Right cardiac atrium (tissue), 5 donors: ENCODE measurements at regions of chr7 and their contacts with region 1.

Region 1: GRCh38 chr7:158782761-158783401 is 46.4 kb downstream of the ESYT2 start:
- DNase-seq: peak; percentile 77 to 83 (median 79)
- ATAC-seq: peak; percentile 91 to 94
- H3K4me3 ChIP-seq: no peak overlapping the region
- H3K27ac ChIP-seq: peak overlapping the region; percentile 75
- H3K4me1 ChIP-seq: peaks cover 17% of the 10 kb centered on the region
- H3K27me3 ChIP-seq: no peaks in the 10 kb centered on the region

Region 2: GRCh38 chr7:158685693-158686092 is 97.2 kb before region 1 on chr7:
- intact Hi-C with region 1: no loop called
- DNase-seq: no peak
- ATAC-seq: no peak
- H3K4me3 ChIP-seq: no peak overlapping the region
- H3K27ac ChIP-seq: no peak overlapping the region
- H3K4me1 ChIP-seq: no peaks in the 10 kb centered on the region
- H3K27me3 ChIP-seq: no peaks in the 10 kb centered on the region

Region 3: DNA sequence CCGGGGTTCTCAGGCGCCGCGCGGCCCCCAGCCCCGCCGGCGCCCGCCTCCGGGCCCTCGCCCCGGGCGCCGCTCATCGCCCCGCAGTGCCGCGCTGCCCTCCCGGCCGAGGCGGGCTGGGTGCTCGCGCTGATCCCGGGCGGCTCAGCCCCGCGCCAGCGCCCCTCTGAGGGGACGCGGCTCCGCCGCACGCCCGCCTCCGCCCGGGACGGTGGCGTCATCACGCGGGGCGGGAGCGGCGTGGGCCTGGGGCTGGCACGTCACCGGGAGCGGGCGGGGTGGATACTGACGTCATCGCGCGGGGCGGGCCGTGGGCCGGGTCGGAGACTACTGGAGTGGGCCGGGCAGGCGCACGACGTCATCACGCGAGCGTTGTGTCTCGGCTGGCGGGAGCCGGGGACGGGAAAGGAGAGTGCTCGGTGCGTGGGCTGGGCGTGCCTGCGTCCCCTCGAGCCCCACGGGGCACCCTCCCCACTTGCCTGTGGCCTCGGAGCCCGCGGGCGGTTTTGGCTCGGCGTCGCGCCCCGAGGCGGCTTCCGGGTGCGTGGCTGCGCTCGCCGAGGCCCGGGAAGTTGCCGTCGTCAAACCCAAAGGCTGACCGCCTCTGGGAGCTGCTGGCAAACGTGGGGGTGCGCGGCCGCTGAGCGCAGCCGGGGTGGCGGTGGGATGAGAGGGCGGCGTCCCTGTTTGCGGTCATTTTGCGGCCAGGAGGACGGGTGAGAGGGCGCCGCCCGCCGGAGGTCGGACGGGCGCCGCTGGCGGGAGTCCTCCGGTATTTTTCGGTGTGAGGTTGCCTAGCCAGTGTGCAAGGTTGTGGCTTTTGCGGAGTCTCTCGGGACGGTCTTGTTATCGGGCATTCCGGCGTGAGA is 46.7 kb after region 1 on chr7 and contains the start of gene ESYT2:
- intact Hi-C with region 1: loop called in 2 of 4 experiments (anchors 5 kb)
- DNase-seq: peak; percentile 99 to 100 (median 100)
- ATAC-seq: peak; percentile 96
- H3K4me3 ChIP-seq: peak within 1 kb of the TSS; percentile 94
- H3K27ac ChIP-seq: peak within 1 kb of the TSS; percentile 98
- H3K4me1 ChIP-seq: no peaks in the 10 kb centered on the region
- H3K27me3 ChIP-seq: no peaks in the 10 kb centered on the region
- total RNA-seq, gene ESYT2: 48.2 to 84.7 (median 54.6) TPM

Region 4: DNA sequence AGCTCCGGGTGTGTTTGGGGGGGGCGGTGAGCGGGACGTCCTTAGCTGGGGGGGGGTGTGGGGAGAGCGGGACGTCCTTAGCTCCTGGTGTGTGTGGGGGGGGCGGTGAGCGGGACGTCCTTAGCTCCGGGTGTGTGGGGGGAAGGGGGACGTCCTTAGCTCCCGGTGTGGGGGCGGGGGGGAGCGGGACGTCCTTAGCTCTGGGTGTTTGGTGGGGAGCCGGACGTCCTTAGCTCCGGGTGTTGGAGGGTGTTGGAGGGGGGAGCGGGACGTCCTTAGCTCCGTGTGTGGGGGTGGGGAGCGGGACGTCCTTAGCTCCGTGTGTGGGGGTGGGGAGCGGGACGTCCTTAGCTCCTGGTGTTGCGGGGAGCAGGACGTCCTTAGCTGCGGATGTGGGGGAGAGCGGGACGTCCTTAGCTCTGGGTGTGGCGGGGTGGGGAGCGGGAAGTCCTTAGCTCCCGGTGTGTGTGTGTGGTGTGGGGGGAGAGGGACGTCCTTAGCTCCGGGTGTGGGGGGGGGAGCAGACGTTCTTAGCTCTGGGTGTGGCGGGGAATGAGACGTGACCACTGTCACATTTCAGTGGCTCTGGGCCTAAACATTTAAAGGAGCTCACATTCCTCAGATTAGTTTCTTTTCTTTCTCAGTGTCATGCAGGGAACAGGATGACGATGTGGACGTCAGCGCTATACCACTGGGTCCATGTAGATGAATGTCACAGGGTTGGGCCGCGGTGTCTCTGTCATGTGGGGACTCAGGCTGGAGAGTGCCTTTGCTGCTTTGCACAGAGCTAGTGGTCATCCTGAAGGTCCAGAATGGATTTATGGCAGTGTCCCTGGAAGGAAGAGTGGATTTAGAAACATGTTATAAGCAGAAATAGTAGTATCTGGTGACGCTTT is 81.0 kb after region 1 on chr7:
- intact Hi-C with region 1: no loop called
- DNase-seq: peak; percentile 89 to 93 (median 93)
- ATAC-seq: peak; percentile 91 to 95
- H3K4me3 ChIP-seq: peak overlapping the region; percentile 58
- H3K27ac ChIP-seq: peak overlapping the region; percentile 98
- H3K4me1 ChIP-seq: peaks cover 8% of the 10 kb centered on the region
- H3K27me3 ChIP-seq: no peaks in the 10 kb centered on the region

Region 5: GRCh38 chr7:158891922-158892321 is 109.0 kb after region 1 on chr7:
- intact Hi-C with region 1: loop called in 1 of 4 experiments (anchors 10 kb)
- DNase-seq: no peak
- ATAC-seq: no peak
- H3K4me3 ChIP-seq: no peak overlapping the region
- H3K27ac ChIP-seq: no peak overlapping the region
- H3K4me1 ChIP-seq: no peaks in the 10 kb centered on the region
- H3K27me3 ChIP-seq: no peaks in the 10 kb centered on the region